Common myeloid progenitor, CD34-positive (primary cell): ENCODE measurements at regions of chr3 and their contacts with region 1.

Region 1: GRCh38 chr3:94220426-94220825 is 157.6 kb downstream of the NSUN3 start:
- DNase-seq: no peak
- H3K4me3 ChIP-seq: no peak overlapping the region
- H3K27ac ChIP-seq: no peak overlapping the region
- H3K4me1 ChIP-seq: peaks cover 0 to 2% (median 0%) of the 10 kb centered on the region in 4 experiments
- H3K27me3 ChIP-seq: no peaks in the 10 kb centered on the region

Region 2: GRCh38 chr3:94011233-94011711 is 209.2 kb before region 1 on chr3:
- CTCF ChIA-PET with region 1: no interaction called
- POLR2A ChIA-PET with region 1: no interaction called
- DNase-seq: peak in 1 of 3 donors; percentile 4
- H3K4me3 ChIP-seq: no peak overlapping the region
- H3K27ac ChIP-seq: no peak overlapping the region
- H3K4me1 ChIP-seq: no peaks in the 10 kb centered on the region
- H3K27me3 ChIP-seq: no peaks in the 10 kb centered on the region

Region 3: DNA sequence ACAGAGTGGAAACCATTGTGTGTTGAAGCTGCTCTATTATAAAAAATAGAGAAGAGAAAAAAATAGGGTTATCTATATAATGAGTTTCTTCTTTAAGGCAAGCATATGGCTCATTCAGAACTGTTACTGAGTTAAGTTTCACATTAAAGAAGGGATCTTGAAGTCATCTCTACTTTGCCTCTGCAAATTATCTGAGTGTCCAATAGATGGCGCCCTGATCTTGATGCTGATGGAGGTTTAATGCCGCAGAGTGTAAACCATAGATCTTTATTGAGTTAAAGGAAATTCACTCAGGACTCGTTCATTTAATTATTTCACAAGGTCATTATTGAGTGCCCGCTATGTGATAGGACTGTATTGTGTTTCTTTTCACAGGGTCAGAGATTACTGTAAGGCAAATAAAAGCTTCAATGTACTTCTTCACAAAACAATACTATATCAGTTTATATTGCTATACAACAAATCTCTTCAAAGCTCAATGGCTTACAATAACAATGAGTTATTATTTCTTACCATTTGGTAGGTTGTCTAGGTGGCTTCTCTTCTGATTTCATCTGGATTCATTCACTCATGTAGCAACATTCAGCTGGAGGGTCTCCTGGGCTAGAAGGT is 13.9 kb after region 1 on chr3:
- CTCF ChIA-PET with region 1: interaction called, 11 read pairs
- POLR2A ChIA-PET with region 1: no interaction called
- DNase-seq: peak; percentile 52 to 79 (median 73)
- H3K4me3 ChIP-seq: no peak overlapping the region
- H3K27ac ChIP-seq: no peak overlapping the region
- H3K4me1 ChIP-seq: peaks cover 10 to 13% (median 11%) of the 10 kb centered on the region in 4 experiments
- H3K27me3 ChIP-seq: no peaks in the 10 kb centered on the region